ENCODE measurements at regions of chr7 and their contacts with region 1.

Region 1: DNA sequence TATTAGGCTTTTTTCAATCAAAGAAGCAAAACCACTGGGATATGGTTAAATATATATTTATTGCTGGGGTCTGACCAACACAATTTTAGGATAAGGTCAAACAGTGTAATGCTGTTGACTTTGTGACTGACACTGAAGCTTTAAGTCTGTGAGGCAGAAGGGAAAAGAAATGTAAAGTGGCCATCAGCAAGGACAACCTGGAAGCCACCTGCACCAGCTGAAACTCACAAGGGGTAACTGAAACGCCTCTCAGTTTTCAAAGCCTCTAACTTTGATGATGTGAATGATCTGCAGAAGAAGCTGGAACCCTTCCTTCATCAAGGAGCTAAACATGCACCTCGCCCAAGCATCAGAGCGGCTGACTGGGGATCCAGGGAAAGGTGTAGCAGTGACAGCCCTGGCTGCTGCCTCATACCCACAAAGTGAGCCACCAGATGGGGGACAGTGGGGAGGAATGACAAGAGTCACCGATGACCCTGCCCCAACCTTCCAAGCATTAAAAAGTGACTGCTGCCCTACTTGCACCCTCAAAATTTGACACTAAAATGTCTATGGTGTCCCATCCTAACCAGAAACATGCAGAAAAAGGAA is 284.9 kb upstream of the CNTNAP2 start:
- DNase-seq: no peak
- H3K4me3 ChIP-seq: no peak overlapping the region
- H3K27ac ChIP-seq: no peak overlapping the region
- H3K4me1 ChIP-seq: peaks cover 3% of the 10 kb centered on the region
- CTCF ChIP-seq: no peak

Region 2: DNA sequence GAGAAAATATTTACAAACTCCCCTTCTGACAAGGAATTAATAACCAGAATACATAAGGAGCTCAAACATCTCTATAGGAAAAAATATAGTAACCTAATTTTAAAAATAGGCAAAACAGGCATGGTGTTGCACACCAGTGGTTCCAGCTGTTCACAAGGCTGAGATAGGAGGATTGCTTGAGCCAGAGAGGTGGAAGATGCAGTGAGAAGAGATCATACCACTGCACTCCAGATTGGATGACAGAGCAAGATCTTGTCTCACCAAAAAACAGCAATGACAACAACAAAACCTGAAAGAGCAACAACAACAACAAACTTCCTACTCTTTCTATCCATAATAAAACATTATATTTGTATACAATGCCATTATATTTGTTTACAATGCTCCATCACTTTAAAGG is 19.5 kb before region 1 on chr7:
- CTCF ChIA-PET with region 1: no interaction called
- POLR2A ChIA-PET with region 1: interaction called, 10 read pairs
- intact Hi-C with region 1: no loop called
- DNase-seq: no peak
- H3K4me3 ChIP-seq: no peak overlapping the region
- H3K27ac ChIP-seq: peak overlapping the region; percentile 38
- H3K4me1 ChIP-seq: peaks cover 56% of the 10 kb centered on the region
- CTCF ChIP-seq: no peak

Measured in OCI-LY7 (cell line).